Calu3 (cell line): ENCODE measurements at regions of chr2 and their contacts with region 1.

Region 1: GRCh38 chr2:54206596-54206995 is 49.4 kb downstream of the TSPYL6 start:
- DNase-seq: peak; percentile 28
- H3K4me3 Mint-ChIP-seq: no peak overlapping the region
- H3K27ac Mint-ChIP-seq: no peak overlapping the region
- H3K4me1 Mint-ChIP-seq: no peaks in the 10 kb centered on the region
- H3K27me3 Mint-ChIP-seq: no peaks in the 10 kb centered on the region
- CTCF ChIP-seq: peak; percentile 48

Region 2: GRCh38 chr2:54176577-54176976 is 30.0 kb before region 1 on chr2:
- CTCF ChIA-PET with region 1: no interaction called
- intact Hi-C with region 1: no loop called
- DNase-seq: peak; percentile 42
- H3K4me3 Mint-ChIP-seq: no peak overlapping the region
- H3K27ac Mint-ChIP-seq: no peak overlapping the region
- H3K4me1 Mint-ChIP-seq: no peaks in the 10 kb centered on the region
- H3K27me3 Mint-ChIP-seq: no peaks in the 10 kb centered on the region
- CTCF ChIP-seq: no peak

Region 3: GRCh38 chr2:54228945-54229344 is 22.3 kb after region 1 on chr2:
- CTCF ChIA-PET with region 1: no interaction called
- intact Hi-C with region 1: no loop called
- DNase-seq: no peak
- H3K4me3 Mint-ChIP-seq: no peak overlapping the region
- H3K27ac Mint-ChIP-seq: no peak overlapping the region
- H3K4me1 Mint-ChIP-seq: no peaks in the 10 kb centered on the region
- H3K27me3 Mint-ChIP-seq: no peaks in the 10 kb centered on the region
- CTCF ChIP-seq: no peak

Region 4: GRCh38 chr2:54455563-54456361 is 249.2 kb after region 1 on chr2 and contains the start of gene SPTBN1:
- CTCF ChIA-PET with region 1: no interaction called
- intact Hi-C with region 1: loop called (anchors 5 kb)
- DNase-seq: peak; percentile 80
- H3K4me3 Mint-ChIP-seq: peak within 1 kb of the TSS; percentile 97
- H3K27ac Mint-ChIP-seq: peak within 1 kb of the TSS; percentile 66
- H3K4me1 Mint-ChIP-seq: peaks cover 31% of the 10 kb centered on the region
- H3K27me3 Mint-ChIP-seq: no peaks in the 10 kb centered on the region
- CTCF ChIP-seq: no peak
- total RNA-seq, gene SPTBN1: 611 and 687 TPM in 2 replicates

Region 5: GRCh38 chr2:54503192-54503591 is 296.6 kb after region 1 on chr2:
- CTCF ChIA-PET with region 1: interaction called, 3 read pairs
- intact Hi-C with region 1: loop called (anchors 5 kb)
- DNase-seq: peak; percentile 39
- H3K4me3 Mint-ChIP-seq: no peak overlapping the region
- H3K27ac Mint-ChIP-seq: no peak overlapping the region
- H3K4me1 Mint-ChIP-seq: peaks cover 8% of the 10 kb centered on the region
- H3K27me3 Mint-ChIP-seq: no peaks in the 10 kb centered on the region
- CTCF ChIP-seq: peak; percentile 38